OCI-LY7 (cell line): ENCODE measurements at regions of chr2 and their contacts with region 1.

Region 1: GRCh38 chr2:97747716-97748115 is 34.3 kb downstream of the ZAP70 start:
- DNase-seq: no peak
- H3K4me3 ChIP-seq: no peak overlapping the region
- H3K27ac ChIP-seq: no peak overlapping the region
- H3K4me1 ChIP-seq: no peaks in the 10 kb centered on the region
- CTCF ChIP-seq: no peak

Region 2: GRCh38 chr2:97697252-97698235 is 50.2 kb before region 1 on chr2:
- CTCF ChIA-PET with region 1: interaction called, 3 read pairs
- POLR2A ChIA-PET with region 1: interaction called, 9 read pairs
- intact Hi-C with region 1: loop called (anchors 1 kb)
- DNase-seq: peak; percentile 89
- H3K4me3 ChIP-seq: peak overlapping the region; percentile 15
- H3K27ac ChIP-seq: no peak overlapping the region
- H3K4me1 ChIP-seq: peaks cover 6% of the 10 kb centered on the region
- CTCF ChIP-seq: peak; percentile 98

Region 3: DNA sequence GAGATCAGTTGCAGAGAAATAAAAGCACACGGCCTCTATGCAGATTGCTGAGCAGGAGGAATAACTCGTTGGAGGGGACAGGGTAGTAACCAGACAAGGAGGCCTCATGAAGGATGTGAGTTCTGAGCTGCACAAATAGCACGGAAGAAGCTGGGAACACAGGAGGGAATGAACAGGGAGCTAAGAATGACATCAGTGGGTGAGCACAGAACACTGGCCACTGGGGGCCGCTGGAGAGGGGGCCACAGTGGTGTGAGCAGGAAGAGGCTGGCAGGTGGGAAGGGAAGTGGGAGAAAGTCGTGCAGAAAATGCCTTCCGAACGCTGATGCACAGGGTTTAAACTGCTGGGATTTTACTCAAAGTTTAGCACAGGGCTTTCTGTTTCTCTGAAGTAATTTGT is 26.7 kb after region 1 on chr2:
- CTCF ChIA-PET with region 1: no interaction called
- POLR2A ChIA-PET with region 1: interaction called, 10 read pairs
- intact Hi-C with region 1: no loop called
- DNase-seq: peak; percentile 39
- H3K4me3 ChIP-seq: no peak overlapping the region
- H3K27ac ChIP-seq: no peak overlapping the region
- H3K4me1 ChIP-seq: no peaks in the 10 kb centered on the region
- CTCF ChIP-seq: peak; percentile 82